Activated T-helper 2 cell treated with anti-CD3 and anti-CD28 coated beads, Interferon-gamma antibody, Interleukin-2, Interleukin-4, amounts not matched to agents 10 μg/mL and 5 μg/mL and 100 μg/mL, durations not matched to agents 14 hours and 24 hours and 36 hours (primary cell): ENCODE measurements at regions of chr14 and their contacts with region 1.

Region 1: GRCh38 chr14:93959239-93960107 is 16.9 kb downstream of the ASB2 start:
- DNase-seq: peak; percentile 93
- H3K4me3 Mint-ChIP-seq: peak overlapping the region; percentile 76
- H3K27ac Mint-ChIP-seq: peak overlapping the region; percentile 100
- H3K4me1 Mint-ChIP-seq: peaks cover 91% of the 10 kb centered on the region
- H3K27me3 Mint-ChIP-seq: no peaks in the 10 kb centered on the region

Region 2: GRCh38 chr14:93870377-93870776 is 89.1 kb before region 1 on chr14:
- intact Hi-C with region 1: no loop called
- DNase-seq: no peak
- H3K4me3 Mint-ChIP-seq: no peak overlapping the region
- H3K27ac Mint-ChIP-seq: no peak overlapping the region
- H3K4me1 Mint-ChIP-seq: no peaks in the 10 kb centered on the region
- H3K27me3 Mint-ChIP-seq: peaks cover 14% of the 10 kb centered on the region

Region 3: DNA sequence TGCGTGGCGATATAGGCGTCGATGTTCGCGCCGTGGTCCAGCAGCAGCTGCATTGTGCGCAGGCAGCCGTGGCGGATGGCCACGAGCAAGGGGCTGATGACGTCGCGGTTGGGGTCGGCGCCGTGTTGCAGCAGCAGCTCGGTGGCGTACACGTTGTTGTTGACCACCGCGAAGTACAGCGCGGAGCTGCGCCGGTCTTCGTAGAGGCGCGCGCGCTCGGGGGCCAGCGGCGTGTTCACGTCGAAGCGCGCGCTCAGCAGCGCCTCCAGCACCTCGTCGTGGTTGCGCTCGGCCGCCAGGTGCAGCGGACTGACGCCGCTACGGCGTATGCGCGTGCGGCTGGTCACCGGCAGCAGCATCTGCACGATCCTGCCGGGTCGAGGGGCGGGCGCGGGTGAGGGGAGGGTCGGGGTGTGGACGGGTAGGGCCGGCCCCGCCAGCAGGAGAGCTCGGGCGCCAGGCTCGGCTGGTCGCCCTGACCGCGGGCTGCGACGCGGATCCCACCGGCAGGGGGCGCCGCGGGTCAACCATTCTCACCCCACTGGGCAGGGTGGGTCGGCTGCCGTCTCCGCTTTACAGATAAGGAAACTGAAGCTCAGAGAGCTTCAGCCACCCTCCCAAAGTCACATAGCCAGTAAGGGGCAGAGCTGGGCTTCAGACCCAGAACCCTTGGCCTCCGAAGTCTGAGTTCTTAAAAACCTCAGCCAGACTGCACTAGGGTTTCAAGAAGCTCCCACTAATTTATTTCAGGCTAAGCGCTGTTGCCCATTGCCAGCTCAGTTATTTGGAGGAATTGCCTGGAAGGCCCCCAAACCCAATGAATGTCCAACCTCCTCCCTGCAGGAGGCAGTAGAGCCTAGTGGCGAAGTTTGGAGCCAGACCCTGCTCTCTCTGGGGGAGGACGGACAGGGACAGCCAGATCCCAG is 19.9 kb before region 1 on chr14:
- intact Hi-C with region 1: loop called (anchors 2 kb)
- DNase-seq: peak; percentile 86
- H3K4me3 Mint-ChIP-seq: peak overlapping the region; percentile 49
- H3K27ac Mint-ChIP-seq: peak overlapping the region; percentile 67
- H3K4me1 Mint-ChIP-seq: peaks cover 18% of the 10 kb centered on the region
- H3K27me3 Mint-ChIP-seq: no peaks in the 10 kb centered on the region

Region 4: GRCh38 chr14:93970549-93970946 is 11.1 kb after region 1 on chr14:
- intact Hi-C with region 1: loop called (anchors 1 kb)
- DNase-seq: peak; percentile 43
- H3K4me3 Mint-ChIP-seq: peak overlapping the region; percentile 85
- H3K27ac Mint-ChIP-seq: peak overlapping the region; percentile 99
- H3K4me1 Mint-ChIP-seq: peaks cover 89% of the 10 kb centered on the region
- H3K27me3 Mint-ChIP-seq: no peaks in the 10 kb centered on the region

Region 5: GRCh38 chr14:93975791-93976476 is 16.5 kb after region 1 on chr14:
- intact Hi-C with region 1: loop called (anchors 1 kb)
- DNase-seq: peak; percentile 38
- H3K4me3 Mint-ChIP-seq: peak overlapping the region; percentile 83
- H3K27ac Mint-ChIP-seq: peak overlapping the region; percentile 100
- H3K4me1 Mint-ChIP-seq: peaks cover 87% of the 10 kb centered on the region
- H3K27me3 Mint-ChIP-seq: no peaks in the 10 kb centered on the region

Region 6: GRCh38 chr14:94001501-94002396 is 42.3 kb after region 1 on chr14:
- intact Hi-C with region 1: loop called (anchors 2 kb)
- DNase-seq: peak; percentile 52
- H3K4me3 Mint-ChIP-seq: no peak overlapping the region
- H3K27ac Mint-ChIP-seq: peak overlapping the region; percentile 47
- H3K4me1 Mint-ChIP-seq: peaks cover 40% of the 10 kb centered on the region
- H3K27me3 Mint-ChIP-seq: no peaks in the 10 kb centered on the region

Region 7: DNA sequence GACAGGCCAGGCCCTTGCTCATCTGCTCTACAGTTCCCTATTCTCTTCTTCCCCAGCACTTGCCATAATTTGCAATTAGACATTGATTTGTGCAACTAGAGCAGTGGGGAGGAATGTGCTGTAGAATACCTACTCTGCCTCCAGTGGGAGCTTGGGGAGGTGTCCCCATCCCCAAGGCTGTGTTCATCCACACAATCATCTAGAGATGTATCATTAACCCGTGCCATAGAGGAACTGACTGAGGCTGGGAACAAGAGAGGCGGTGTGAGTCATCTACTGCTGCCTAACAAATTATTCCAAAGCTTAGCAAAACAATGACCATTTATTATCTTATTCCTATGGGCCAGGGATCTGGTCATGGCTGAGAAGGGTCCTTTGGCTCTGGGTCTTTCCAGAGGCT is 61.5 kb after region 1 on chr14:
- intact Hi-C with region 1: loop called (anchors 1 kb)
- DNase-seq: no peak
- H3K4me3 Mint-ChIP-seq: no peak overlapping the region
- H3K27ac Mint-ChIP-seq: peak overlapping the region; percentile 81
- H3K4me1 Mint-ChIP-seq: peaks cover 36% of the 10 kb centered on the region
- H3K27me3 Mint-ChIP-seq: peaks cover 8% of the 10 kb centered on the region

Region 8: GRCh38 chr14:94180655-94181271 is 221.3 kb after region 1 on chr14:
- intact Hi-C with region 1: loop called (anchors 5 kb)
- DNase-seq: no peak
- H3K4me3 Mint-ChIP-seq: peak overlapping the region; percentile 40
- H3K27ac Mint-ChIP-seq: peak overlapping the region; percentile 9
- H3K4me1 Mint-ChIP-seq: peaks cover 14% of the 10 kb centered on the region
- H3K27me3 Mint-ChIP-seq: peaks cover 28% of the 10 kb centered on the region